K562 (cell line): ENCODE measurements at regions of chr5 and their contacts with region 1.

Region 1: GRCh38 chr5:88967633-88968585 is 84.9 kb upstream of the MEF2C start:
- DNase-seq: no peak
- ATAC-seq: no peak
- H3K4me3 ChIP-seq: no peak overlapping the region
- H3K27ac ChIP-seq: no peak overlapping the region
- H3K4me1 ChIP-seq: no peaks in the 10 kb centered on the region
- H3K27me3 ChIP-seq: no peaks in the 10 kb centered on the region
- CTCF ChIP-seq: no peak
- EP300 ChIP-seq: no peak
- POLR2A ChIP-seq: no peak
- RAD21 ChIP-seq: no peak

Region 2: GRCh38 chr5:89435347-89435746 is 467.4 kb after region 1 on chr5:
- CTCF ChIA-PET with region 1: no interaction called
- POLR2A ChIA-PET with region 1: no interaction called
- in situ Hi-C with region 1: loop called (anchors 10 kb)
- intact Hi-C with region 1: no loop called
- DNase-seq: no peak
- ATAC-seq: no peak
- H3K4me3 ChIP-seq: no peak overlapping the region
- H3K27ac ChIP-seq: no peak overlapping the region
- H3K4me1 ChIP-seq: no peaks in the 10 kb centered on the region; a peak in 1 of 5 replicates
- H3K27me3 ChIP-seq: no peaks in the 10 kb centered on the region
- CTCF ChIP-seq: no peak
- EP300 ChIP-seq: no peak
- POLR2A ChIP-seq: no peak
- RAD21 ChIP-seq: no peak